ENCODE measurements at regions of chr6 and their contacts with region 1.

Region 1: DNA sequence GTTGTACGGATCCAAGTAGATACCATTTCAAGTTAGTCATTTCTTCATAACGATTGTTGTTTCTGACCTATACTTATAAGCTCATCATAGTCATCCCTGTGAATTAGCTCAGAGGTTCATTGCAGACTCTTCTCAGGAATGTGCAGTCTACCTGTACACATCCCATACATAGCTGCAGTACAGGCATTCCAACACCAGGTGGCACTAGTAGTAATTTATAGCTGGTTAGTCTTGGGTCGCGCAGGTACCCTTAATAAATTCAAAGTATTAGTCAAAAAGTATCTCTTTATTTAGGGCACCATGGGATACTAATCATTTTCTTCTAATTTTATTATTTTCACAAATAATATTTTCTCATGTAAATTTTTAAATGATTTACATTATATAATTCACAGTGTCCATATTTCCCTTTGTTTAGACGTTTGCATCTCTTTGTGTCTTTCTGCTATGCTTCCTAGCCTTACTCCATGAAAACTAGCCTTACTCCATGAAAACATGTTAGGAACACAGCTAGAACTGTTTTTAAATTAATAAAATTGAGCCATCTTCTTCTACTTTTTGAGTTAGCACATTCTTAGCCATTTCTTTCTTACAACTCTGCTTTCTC is 128.6 kb upstream of the FAM83B start:
- DNase-seq: peak; percentile 15 to 48
- ATAC-seq: peak in 1 of 2 experiments; percentile 76; a peak in 3 of 6 replicates
- H3K4me3 ChIP-seq: no peak overlapping the region
- H3K27ac ChIP-seq: no peak overlapping the region
- H3K4me1 ChIP-seq: no peaks in the 10 kb centered on the region
- CTCF ChIP-seq: peak; percentile 60
- EP300 ChIP-seq: no peak
- POLR2A ChIP-seq: no peak
- RAD21 ChIP-seq: peak; percentile 53 to 55

Region 2: GRCh38 chr6:53986165-53986720 is 731.7 kb before region 1 on chr6:
- CTCF ChIA-PET with region 1: interaction called, 13 read pairs
- POLR2A ChIA-PET with region 1: no interaction called
- DNase-seq: peak; percentile 10 to 39
- ATAC-seq: peak in 1 of 2 experiments; percentile 68; a peak in 3 of 6 replicates
- H3K4me3 ChIP-seq: no peak overlapping the region
- H3K27ac ChIP-seq: no peak overlapping the region
- H3K4me1 ChIP-seq: peaks cover 26% of the 10 kb centered on the region
- CTCF ChIP-seq: peak; percentile 83
- EP300 ChIP-seq: no peak
- POLR2A ChIP-seq: no peak
- RAD21 ChIP-seq: peak; percentile 83 to 84

Region 3: DNA sequence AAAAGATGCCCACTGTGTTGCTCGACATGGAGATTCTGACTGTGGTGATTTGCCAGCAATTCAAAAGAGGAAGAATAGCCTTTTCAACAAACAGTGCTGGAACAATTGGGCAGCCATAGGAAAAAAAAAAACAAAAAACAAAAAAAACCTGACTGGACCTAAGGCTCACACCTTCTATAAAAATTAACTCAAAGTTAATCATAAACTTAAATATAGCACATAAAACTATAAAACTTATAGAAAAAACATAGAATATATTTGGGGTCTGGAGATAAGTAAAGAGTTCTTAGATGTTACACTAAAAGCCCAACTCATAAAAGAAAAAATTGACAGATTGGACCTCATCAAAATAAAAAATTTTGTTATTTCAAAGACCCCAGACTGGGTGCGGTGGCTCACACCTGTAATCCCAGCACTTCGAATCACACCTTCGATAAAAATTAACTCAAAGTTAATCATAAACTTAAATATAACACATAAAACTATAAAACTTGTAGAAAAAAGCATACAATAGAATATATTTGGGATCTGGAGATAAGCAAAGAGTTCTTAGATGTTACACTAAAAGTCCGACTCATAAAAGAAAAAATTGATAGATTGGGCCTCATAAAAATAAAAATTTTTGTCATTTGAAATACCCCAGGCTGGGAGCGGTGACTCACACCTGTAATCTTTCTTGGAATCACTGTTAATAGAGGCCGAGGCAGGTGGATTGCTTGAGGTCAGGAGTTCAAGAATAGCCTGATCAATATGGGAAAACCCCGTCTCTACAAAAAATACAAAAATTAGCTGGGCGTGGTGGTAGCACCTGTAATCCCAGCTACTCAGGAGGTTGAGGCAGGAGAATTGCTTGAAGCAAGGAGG is 13.0 kb after region 1 on chr6:
- CTCF ChIA-PET with region 1: interaction called, 15 read pairs
- POLR2A ChIA-PET with region 1: no interaction called
- DNase-seq: no peak
- ATAC-seq: no peak
- H3K4me3 ChIP-seq: no peak overlapping the region
- H3K27ac ChIP-seq: no peak overlapping the region
- H3K4me1 ChIP-seq: no peaks in the 10 kb centered on the region
- CTCF ChIP-seq: no peak
- EP300 ChIP-seq: no peak
- POLR2A ChIP-seq: no peak
- RAD21 ChIP-seq: no peak

Region 4: DNA sequence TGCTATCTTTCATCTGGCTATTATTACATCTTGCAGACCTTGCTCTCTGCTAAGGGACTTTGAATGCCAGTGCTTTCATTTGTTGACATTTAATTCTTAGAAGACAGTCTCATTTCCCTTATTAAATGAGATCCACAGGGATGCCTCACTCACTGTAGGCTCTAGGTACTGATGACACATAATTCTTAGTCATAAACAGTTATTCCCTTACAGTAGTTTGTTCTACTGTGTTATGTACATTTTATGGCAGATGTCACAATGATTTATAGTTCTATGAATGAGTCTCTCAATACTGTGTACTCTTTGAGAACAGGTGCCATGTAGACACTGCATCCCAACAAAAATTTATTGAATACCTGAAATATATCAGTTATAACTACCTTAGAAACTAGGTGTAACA is 198.9 kb after region 1 on chr6:
- CTCF ChIA-PET with region 1: no interaction called
- POLR2A ChIA-PET with region 1: no interaction called
- DNase-seq: peak; percentile 15 to 32
- ATAC-seq: peak; percentile 69 to 74; a peak in 5 of 6 replicates
- H3K4me3 ChIP-seq: no peak overlapping the region
- H3K27ac ChIP-seq: no peak overlapping the region
- H3K4me1 ChIP-seq: 0 out of 3 replicates have a peak, but pooled peaks cover 11% of the 10 kb centered on the region
- CTCF ChIP-seq: no peak
- EP300 ChIP-seq: no peak
- POLR2A ChIP-seq: no peak
- RAD21 ChIP-seq: no peak

Region 5: DNA sequence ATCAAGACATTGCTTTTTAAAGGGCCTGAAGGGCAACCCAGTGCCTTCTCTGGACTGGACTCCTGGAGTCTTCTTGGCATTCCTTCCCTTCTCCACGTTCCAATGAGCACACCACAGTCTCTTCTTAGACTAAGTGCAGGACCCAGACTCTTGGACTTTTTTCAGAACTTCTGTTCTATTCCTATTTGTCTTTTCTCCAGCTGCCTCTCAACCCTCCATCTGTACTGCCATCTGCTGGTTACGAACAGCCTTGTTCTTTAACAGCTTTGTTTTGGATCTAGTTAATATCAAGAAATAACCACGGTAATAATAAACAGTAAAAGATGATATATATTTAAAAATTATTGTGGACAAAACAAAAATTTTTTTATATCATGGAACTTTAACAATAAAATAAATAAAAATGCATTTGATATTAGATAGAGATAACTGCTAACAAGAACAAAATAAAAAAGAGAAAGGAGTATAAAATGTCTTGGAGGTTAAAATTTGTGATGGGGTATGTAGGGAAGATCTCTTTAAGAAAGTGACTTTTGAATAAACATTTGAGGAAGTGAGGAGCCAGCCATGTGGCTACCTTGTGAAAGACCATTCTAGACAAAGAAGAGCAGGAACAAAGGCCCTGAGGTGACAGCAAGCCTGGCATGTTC is 351.3 kb after region 1 on chr6:
- CTCF ChIA-PET with region 1: interaction called, 14 read pairs
- POLR2A ChIA-PET with region 1: no interaction called
- DNase-seq: peak; percentile 4 to 12
- ATAC-seq: no peak
- H3K4me3 ChIP-seq: no peak overlapping the region
- H3K27ac ChIP-seq: no peak overlapping the region
- H3K4me1 ChIP-seq: no peaks in the 10 kb centered on the region
- CTCF ChIP-seq: peak; percentile 53
- EP300 ChIP-seq: no peak
- POLR2A ChIP-seq: no peak
- RAD21 ChIP-seq: peak; percentile 58 to 66